ENCODE measurements at regions of chr2 and their contacts with region 1.

Region 1: DNA sequence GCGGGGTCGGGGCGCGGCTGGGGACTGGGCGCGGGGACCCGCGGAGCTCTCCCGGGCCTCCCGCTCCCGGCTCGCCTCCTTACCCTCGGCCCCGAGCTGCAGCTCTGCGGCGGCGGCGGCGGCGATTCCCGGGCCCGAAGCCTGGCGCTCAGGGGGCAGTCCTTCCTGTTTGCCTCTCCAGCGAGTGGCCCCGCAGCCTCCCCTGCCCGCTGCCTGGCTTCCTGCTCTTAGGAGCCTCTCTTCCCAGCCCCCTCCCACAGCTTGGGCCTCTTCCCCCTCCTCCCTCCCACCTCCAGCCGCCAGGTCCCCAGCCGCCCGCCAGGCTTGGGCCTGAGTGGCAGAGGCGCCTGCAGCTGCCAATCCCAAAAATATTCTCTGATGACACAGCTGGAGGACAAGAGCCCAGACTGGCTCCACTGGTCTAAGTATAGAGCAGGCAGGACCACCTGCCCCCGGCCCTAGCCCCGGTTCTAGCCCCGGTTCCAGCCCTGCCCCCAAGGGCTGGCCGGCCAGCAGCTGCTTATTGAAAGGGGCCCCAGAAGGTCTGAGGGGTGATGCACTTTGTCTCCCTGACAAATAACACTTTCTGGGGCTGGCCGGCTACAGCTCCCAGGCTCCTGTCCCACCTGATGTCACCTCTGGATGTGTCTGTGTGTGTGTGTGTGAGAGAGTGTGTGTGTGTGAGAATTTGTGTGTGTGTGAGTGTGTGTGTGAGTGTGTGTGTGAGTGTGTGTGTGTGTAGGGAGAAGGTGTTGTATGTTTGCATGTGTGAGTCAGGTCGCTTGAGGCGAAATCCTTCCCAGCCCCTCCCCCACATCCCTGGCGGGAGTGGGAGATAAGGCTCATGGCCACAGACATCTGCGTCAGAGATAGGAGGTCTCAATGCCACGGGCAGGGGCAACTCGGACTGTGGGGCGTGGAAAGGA is at the start of gene OBSL1:
- DNase-seq: peak; percentile 52 to 71
- ATAC-seq: peak; percentile 55 to 80
- H3K4me3 ChIP-seq: peak within 1 kb of the TSS; percentile 92
- H3K27ac ChIP-seq: peak within 1 kb of the TSS; percentile 82 to 95
- H3K4me1 ChIP-seq: peaks cover 14% of the 10 kb centered on the region
- CTCF ChIP-seq: no peak
- EP300 ChIP-seq: no peak
- POLR2A ChIP-seq: peak; percentile 43
- RAD21 ChIP-seq: no peak
- polyA plus RNA-seq, gene OBSL1: 14.4 and 15.6 TPM in 2 replicates

Region 2: DNA sequence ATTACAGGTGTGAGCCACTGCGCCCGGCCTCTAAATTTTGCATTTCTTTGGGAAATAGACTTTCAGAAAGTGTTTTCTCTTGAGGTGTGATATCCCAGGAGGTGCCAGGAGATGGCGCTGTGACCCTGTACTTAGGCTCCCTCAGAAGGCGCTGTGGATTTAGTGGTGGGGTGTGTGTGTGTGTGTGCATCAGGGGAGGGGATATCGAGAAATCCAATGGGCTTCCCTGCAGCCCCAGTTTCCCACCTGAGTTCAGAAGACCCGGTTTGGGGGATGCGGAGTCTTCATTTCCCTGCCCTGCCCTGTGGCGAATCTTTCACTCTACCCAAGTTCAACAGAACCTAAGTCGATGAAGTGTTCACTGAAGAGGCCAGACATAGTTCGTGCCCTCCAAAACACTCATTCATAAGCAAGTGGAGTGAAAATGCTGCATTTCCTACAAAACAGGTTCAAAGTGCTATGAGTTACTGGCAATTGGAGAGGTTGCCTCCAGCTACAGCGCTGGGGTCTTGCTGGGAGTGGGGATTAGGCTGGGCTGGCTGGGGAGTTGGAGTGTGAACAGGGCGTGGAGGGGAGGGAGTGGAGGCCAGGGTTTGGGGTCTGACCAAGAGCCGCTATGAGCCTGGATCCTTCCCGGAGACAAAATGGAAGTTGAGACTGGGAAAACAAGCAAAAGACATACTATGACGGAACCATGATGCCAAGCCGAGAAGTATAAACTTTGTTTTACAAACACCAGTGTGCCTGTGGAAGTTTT is 718.5 kb before region 1 on chr2:
- CTCF ChIA-PET with region 1: no interaction called
- POLR2A ChIA-PET with region 1: no interaction called
- DNase-seq: peak in 1 of 2 experiments; percentile 75
- ATAC-seq: peak; percentile 36 to 73; a peak in 4 of 6 replicates
- H3K4me3 ChIP-seq: no peak overlapping the region
- H3K27ac ChIP-seq: 0 out of 6 replicates have a peak overlapping the region, but pooled peaks of 1 of the 2 experiments have one; percentile 12
- H3K4me1 ChIP-seq: peaks cover 25% of the 10 kb centered on the region
- CTCF ChIP-seq: peak; percentile 83
- EP300 ChIP-seq: no peak
- POLR2A ChIP-seq: no peak
- RAD21 ChIP-seq: peak; percentile 82 to 88

Region 3: GRCh38 chr2:219459460-219460311 is 111.9 kb before region 1 on chr2:
- CTCF ChIA-PET with region 1: no interaction called
- POLR2A ChIA-PET with region 1: no interaction called
- DNase-seq: peak; percentile 59 to 75
- ATAC-seq: peak; percentile 78 to 90
- H3K4me3 ChIP-seq: no peak overlapping the region
- H3K27ac ChIP-seq: peak overlapping the region in 1 of 2 experiments; percentile 44; a peak in 1 of 6 replicates
- H3K4me1 ChIP-seq: 0 out of 3 replicates have a peak, but pooled peaks cover 2% of the 10 kb centered on the region
- CTCF ChIP-seq: peak; percentile 70
- EP300 ChIP-seq: no peak
- POLR2A ChIP-seq: no peak
- RAD21 ChIP-seq: peak; percentile 43 to 61; a peak in 4 of 5 replicates

Region 4: DNA sequence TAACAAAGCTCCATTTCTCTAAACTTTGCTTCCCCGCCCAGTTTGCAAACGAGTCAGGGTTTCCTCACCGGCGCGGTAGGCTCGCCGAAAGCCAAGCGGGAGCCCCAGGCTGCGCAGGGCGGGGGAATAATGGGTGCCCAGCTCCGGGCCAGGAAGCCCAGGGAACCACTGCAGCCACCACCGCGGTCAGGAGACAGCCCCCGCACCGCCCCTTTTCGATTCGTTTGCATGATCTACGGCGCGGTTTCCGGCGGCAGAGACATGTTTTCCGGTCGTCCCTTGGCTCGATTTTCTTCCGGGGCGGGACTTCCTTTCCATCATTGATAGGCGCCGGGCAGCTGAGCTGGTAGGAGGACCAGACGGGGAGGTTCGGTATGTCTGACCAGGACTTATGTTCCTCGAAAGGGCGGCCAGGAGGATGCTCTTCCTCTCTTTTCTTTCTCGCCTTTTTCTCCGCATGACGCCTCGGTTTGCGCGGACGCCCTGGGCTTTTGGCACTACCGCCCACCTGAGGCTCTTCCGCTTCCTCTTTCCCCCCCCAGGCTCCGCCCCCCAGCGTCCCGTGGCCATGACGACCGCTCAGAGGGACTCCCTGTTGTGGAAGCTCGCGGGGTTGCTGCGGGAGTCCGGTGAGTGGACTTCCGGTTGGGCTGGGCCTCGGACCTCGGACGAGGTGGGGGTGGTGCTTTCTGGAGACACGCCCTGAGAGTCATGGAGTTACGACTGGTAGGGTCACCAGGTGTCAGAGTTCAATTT is 26.2 kb after region 1 on chr2 and contains the start of gene STK11IP:
- CTCF ChIA-PET with region 1: interaction called, 5 read pairs
- POLR2A ChIA-PET with region 1: interaction called, 19 read pairs
- DNase-seq: peak; percentile 98 to 99
- ATAC-seq: peak; percentile 96 to 97
- H3K4me3 ChIP-seq: peak within 1 kb of the TSS; percentile 71
- H3K27ac ChIP-seq: peak within 1 kb of the TSS; percentile 90 to 94
- H3K4me1 ChIP-seq: peaks cover 11% of the 10 kb centered on the region; the same call in 2 of the 3 replicates
- CTCF ChIP-seq: no peak
- EP300 ChIP-seq: no peak
- POLR2A ChIP-seq: peak; percentile 93
- RAD21 ChIP-seq: no peak
- polyA plus RNA-seq, gene STK11IP: 13.3 and 18.4 TPM in 2 replicates

Measured in A549 (cell line).